Left colon (tissue), 2 donors: ENCODE measurements at regions of chr3 and their contacts with region 1.

Region 1: GRCh38 chr3:158918008-158918407 is 116.2 kb downstream of the MFSD1 start:
- DNase-seq: peak; percentile 31 to 43
- ATAC-seq: peak; percentile 68

Region 2: DNA sequence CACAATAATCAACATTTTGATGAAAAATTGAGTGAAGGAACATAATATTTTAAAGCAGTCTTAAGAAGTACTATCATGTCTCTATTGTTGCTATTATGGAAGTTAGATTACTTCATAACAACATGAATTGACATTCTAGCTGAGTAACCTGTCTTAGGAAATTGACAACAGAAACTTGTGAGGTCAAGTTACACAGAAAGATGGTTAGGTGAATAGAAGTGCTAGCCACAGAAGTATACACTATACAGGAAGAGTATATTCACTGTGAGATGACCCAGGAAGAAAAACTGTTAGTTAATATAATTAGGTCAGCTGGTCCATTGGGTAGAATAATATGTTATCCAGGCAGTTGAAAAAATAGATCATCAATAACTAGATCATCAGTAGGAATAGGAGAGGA is 315.8 kb before region 1 on chr3:
- intact Hi-C with region 1: loop called in 1 of 2 experiments (anchors 10 kb)
- DNase-seq: no peak
- ATAC-seq: no peak